ENCODE measurements at regions of chr4 and their contacts with region 1.

Region 1: GRCh38 chr4:158327525-158327924 is 117.2 kb downstream of the TMEM144 start:
- DNase-seq: peak; percentile 30
- H3K4me3 ChIP-seq: peak overlapping the region in 1 of 3 experiments; percentile 17
- H3K27ac ChIP-seq: no peak overlapping the region
- H3K4me1 ChIP-seq: no peaks in the 10 kb centered on the region
- H3K27me3 ChIP-seq: no peaks in the 10 kb centered on the region
- CTCF ChIP-seq: no peak

Region 2: GRCh38 chr4:158376106-158376840 is 48.7 kb after region 1 on chr4:
- CTCF ChIA-PET with region 1: interaction called, 5 read pairs
- dilution Hi-C with region 1: loop called (anchors 5 kb)
- in situ Hi-C with region 1: no loop called
- intact Hi-C with region 1: no loop called
- DNase-seq: no peak
- H3K4me3 ChIP-seq: no peak overlapping the region
- H3K27ac ChIP-seq: no peak overlapping the region
- H3K4me1 ChIP-seq: peaks cover 11% of the 10 kb centered on the region
- H3K27me3 ChIP-seq: no peaks in the 10 kb centered on the region
- CTCF ChIP-seq: no peak

Measured in mammary epithelial cell (primary cell).